Dendritic cell treated with granulocyte-macrophage colony-stimulating factor and Interleukin-4, amounts not matched to agents 40 ng/mL and 50 ng/mL, for 4 days (primary cell): ENCODE measurements at regions of chr6 and their contacts with region 1.

Region 1: GRCh38 chr6:6331946-6332601 is 11.6 kb upstream of the F13A1 start:
- H3K4me3 Mint-ChIP-seq: peak overlapping the region; percentile 48
- H3K27ac Mint-ChIP-seq: peak overlapping the region; percentile 95
- H3K4me1 Mint-ChIP-seq: peaks cover 70% of the 10 kb centered on the region
- H3K27me3 Mint-ChIP-seq: no peaks in the 10 kb centered on the region

Region 2: GRCh38 chr6:6315660-6316059 is 16.4 kb before region 1 on chr6:
- intact Hi-C with region 1: loop called (anchors 2 kb)
- H3K4me3 Mint-ChIP-seq: peak overlapping the region; percentile 86
- H3K27ac Mint-ChIP-seq: peak overlapping the region; percentile 91
- H3K4me1 Mint-ChIP-seq: peaks cover 28% of the 10 kb centered on the region
- H3K27me3 Mint-ChIP-seq: no peaks in the 10 kb centered on the region

Region 3: DNA sequence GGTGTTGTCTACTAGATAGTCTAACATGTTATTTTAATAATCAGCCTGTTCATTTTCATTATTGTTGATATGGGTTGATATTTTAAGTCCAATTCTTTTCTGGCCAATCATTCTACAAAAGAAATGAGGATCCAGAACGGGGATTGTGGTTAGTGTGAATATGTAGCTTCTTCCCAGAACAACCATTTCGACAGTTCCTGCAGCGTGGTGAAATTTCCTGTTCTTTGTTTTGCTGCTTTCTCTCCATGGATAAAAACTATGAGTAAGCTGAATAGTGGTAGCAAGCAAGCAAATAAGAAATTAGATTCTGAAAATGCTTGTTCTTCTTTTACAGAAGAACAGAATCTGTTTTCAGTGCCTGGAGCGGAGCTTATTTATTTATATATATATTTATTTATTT is 53.9 kb after region 1 on chr6:
- intact Hi-C with region 1: loop called (anchors 5 kb)
- H3K4me3 Mint-ChIP-seq: no peak overlapping the region
- H3K27ac Mint-ChIP-seq: peak overlapping the region; percentile 89
- H3K4me1 Mint-ChIP-seq: peaks cover 73% of the 10 kb centered on the region
- H3K27me3 Mint-ChIP-seq: no peaks in the 10 kb centered on the region